ENCODE measurements at regions of chr9 and their contacts with region 1.

Region 1: GRCh38 chr9:119768266-119768665 is 399.0 kb upstream of the BRINP1 start:
- DNase-seq: no peak
- H3K4me3 ChIP-seq: no peak overlapping the region
- H3K27ac ChIP-seq: no peak overlapping the region
- H3K4me1 ChIP-seq: no peaks in the 10 kb centered on the region
- H3K27me3 ChIP-seq: peaks cover 5% of the 10 kb centered on the region
- CTCF ChIP-seq: no peak
- POLR2A ChIP-seq: no peak

Region 2: GRCh38 chr9:119556129-119556875 is 212.0 kb before region 1 on chr9:
- intact Hi-C with region 1: no loop called
- DNase-seq: peak; percentile 57 to 89 (median 77)
- H3K4me3 ChIP-seq: peak overlapping the region in 1 of 4 donors; percentile 25
- H3K27ac ChIP-seq: no peak overlapping the region
- H3K4me1 ChIP-seq: peaks cover 0 to 5% of the 10 kb centered on the region in 2 donors
- H3K27me3 ChIP-seq: no peaks in the 10 kb centered on the region
- CTCF ChIP-seq: peak; percentile 76 to 93 (median 85)
- POLR2A ChIP-seq: no peak

Region 3: GRCh38 chr9:119818726-119819435 is 50.6 kb after region 1 on chr9:
- intact Hi-C with region 1: loop called in 1 of 2 experiments (anchors 5 kb)
- DNase-seq: no peak
- H3K4me3 ChIP-seq: no peak overlapping the region
- H3K27ac ChIP-seq: no peak overlapping the region
- H3K4me1 ChIP-seq: no peaks in the 10 kb centered on the region
- H3K27me3 ChIP-seq: no peaks in the 10 kb centered on the region
- CTCF ChIP-seq: no peak
- POLR2A ChIP-seq: no peak